ENCODE measurements at regions of chr12 and their contacts with region 1.

Region 1: GRCh38 chr12:111149299-111149698 is 219.6 kb downstream of the PHETA1 start:
- DNase-seq: no peak
- H3K4me3 ChIP-seq: no peak overlapping the region
- H3K27me3 ChIP-seq: peaks cover 9% of the 10 kb centered on the region; the same call in 1 of the 2 replicates
- CTCF ChIP-seq: no peak

Region 2: GRCh38 chr12:111170543-111170942 is 21.2 kb after region 1 on chr12:
- CTCF ChIA-PET with region 1: no interaction called
- POLR2A ChIA-PET with region 1: interaction called, 27 read pairs
- DNase-seq: no peak
- H3K4me3 ChIP-seq: no peak overlapping the region
- H3K27me3 ChIP-seq: peaks cover 3% of the 10 kb centered on the region
- CTCF ChIP-seq: no peak

Measured in BJ (cell line).